Body of pancreas (tissue), 4 donors: ENCODE measurements at regions of chr2 and their contacts with region 1.

Region 1: GRCh38 chr2:217785544-217786045 is 217.2 kb downstream of the TNS1 start:
- DNase-seq: peak; percentile 76 to 87 (median 82)
- ATAC-seq: peak; percentile 78
- H3K4me3 ChIP-seq: no peak overlapping the region
- H3K27ac ChIP-seq: no peak overlapping the region
- H3K4me1 ChIP-seq: peaks cover 6% of the 10 kb centered on the region
- H3K27me3 ChIP-seq: no peaks in the 10 kb centered on the region
- CTCF ChIP-seq: peak; percentile 88 to 98 (median 95)
- POLR2A ChIP-seq: no peak

Region 2: DNA sequence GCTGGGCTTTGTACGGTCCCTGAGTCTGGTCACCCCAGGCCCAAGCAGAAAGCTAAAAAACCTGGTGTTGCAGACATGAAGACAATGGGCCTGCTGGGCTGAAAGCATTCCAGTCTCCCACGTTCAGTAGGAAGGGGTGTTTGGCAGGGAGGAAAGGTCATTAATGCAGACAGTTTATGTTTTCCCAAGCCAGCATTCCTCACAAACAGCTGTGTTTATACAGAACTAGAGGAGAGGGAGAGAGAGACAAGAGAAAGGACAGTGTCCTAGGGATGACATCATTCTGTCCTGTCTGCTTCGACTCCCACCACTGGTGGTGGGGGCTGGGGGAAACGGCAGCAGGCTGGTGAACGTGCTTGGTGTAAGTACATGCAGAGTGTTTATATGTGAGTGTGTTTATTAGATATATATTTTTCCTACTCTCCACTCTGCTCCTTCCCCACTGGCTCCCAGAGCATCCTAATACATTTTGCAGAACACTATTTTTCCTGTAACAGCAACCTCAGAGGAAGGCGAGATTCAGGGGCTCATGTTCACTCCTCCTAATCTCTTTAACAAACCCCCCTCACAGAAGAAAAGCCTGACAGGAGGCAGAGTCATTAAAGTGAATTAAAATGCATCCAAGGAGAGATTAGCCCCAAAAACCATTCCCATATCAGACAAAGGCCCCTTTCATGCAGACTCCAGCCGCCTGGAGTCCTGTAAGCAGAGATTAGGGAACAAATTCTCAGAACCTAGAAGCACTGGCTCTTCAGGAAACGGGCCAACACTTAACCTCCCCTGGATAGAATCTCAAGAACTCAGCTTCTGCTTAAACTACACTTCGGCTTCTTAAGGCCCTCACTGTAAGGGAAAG is 163.2 kb before region 1 on chr2:
- intact Hi-C with region 1: no loop called
- DNase-seq: peak in 1 of 4 donors; percentile 9
- ATAC-seq: no peak
- H3K4me3 ChIP-seq: no peak overlapping the region
- H3K27ac ChIP-seq: no peak overlapping the region
- H3K4me1 ChIP-seq: no peaks in the 10 kb centered on the region
- H3K27me3 ChIP-seq: no peaks in the 10 kb centered on the region
- CTCF ChIP-seq: no peak
- POLR2A ChIP-seq: no peak

Region 3: DNA sequence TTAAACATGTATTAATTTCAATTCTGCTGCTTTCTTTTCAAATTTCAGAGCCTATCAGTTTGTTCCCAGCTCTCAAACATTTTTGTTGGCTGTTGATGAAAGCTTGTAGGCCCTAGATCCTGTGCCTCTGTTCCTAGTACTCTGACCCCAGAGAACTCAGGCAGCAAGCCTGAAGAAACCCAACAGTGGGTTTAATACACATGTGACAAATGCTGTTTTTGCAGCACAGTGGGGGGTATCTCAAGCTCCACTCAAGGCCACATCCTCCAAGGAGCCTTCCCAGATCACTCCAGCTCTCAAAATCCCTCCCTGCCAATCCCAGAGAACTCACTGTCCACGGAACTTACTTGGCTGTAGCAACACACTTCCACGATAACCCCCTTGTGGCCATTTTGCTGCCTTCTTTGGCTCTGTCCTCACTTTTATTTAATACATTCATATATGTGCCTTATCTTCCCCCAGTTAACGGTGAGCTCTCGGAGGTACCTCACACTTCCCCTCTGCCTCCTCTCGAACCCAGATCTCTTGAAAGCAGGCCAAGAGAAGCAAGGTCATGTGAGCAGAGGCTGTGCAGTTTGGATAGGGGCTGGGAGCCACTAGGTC is 94.8 kb after region 1 on chr2:
- intact Hi-C with region 1: no loop called
- DNase-seq: no peak
- ATAC-seq: no peak
- H3K4me3 ChIP-seq: no peak overlapping the region
- H3K27ac ChIP-seq: peak overlapping the region in 1 of 4 donors; percentile 1
- H3K4me1 ChIP-seq: no peaks in the 10 kb centered on the region
- H3K27me3 ChIP-seq: no peaks in the 10 kb centered on the region
- CTCF ChIP-seq: no peak
- POLR2A ChIP-seq: no peak

Region 4: DNA sequence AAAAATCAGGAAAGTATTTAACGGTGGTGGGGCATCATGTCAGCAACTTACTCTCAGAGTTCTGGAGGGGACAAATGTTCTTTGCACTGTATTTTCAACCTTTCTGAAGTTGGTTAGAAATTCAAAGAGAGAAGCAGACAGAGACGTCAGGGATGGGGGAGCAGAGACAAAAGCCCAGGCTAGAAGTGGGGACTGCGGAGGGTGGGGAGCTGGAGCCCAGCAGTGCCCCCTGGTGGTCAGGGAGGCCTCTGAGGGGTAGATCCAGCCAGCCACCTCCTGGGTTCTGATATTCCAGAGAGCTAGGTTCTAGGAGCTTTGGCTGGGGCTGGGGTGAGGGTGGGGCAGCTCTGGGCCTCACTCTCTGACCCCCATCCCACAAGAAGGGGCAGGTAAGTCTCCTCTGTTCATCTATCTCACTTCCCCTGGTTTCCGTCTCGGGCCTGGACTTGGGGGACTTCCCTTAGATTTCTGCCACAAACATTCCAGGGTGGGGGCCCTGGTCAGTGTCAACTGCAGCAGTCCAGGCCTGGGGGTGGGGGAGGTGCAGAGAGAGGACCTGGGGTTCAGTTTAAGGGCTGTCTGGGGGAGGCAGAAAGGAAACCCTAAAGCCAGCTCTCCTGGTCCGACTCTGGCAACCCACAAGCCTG is 208.3 kb after region 1 on chr2:
- intact Hi-C with region 1: loop called (anchors 5 kb)
- DNase-seq: peak; percentile 77 to 85 (median 80)
- ATAC-seq: peak; percentile 57
- H3K4me3 ChIP-seq: no peak overlapping the region
- H3K27ac ChIP-seq: peak overlapping the region; percentile 86 to 97 (median 92)
- H3K4me1 ChIP-seq: peaks cover 94% of the 10 kb centered on the region
- H3K27me3 ChIP-seq: no peaks in the 10 kb centered on the region
- CTCF ChIP-seq: peak; percentile 71 to 86 (median 76)
- POLR2A ChIP-seq: no peak

Region 5: DNA sequence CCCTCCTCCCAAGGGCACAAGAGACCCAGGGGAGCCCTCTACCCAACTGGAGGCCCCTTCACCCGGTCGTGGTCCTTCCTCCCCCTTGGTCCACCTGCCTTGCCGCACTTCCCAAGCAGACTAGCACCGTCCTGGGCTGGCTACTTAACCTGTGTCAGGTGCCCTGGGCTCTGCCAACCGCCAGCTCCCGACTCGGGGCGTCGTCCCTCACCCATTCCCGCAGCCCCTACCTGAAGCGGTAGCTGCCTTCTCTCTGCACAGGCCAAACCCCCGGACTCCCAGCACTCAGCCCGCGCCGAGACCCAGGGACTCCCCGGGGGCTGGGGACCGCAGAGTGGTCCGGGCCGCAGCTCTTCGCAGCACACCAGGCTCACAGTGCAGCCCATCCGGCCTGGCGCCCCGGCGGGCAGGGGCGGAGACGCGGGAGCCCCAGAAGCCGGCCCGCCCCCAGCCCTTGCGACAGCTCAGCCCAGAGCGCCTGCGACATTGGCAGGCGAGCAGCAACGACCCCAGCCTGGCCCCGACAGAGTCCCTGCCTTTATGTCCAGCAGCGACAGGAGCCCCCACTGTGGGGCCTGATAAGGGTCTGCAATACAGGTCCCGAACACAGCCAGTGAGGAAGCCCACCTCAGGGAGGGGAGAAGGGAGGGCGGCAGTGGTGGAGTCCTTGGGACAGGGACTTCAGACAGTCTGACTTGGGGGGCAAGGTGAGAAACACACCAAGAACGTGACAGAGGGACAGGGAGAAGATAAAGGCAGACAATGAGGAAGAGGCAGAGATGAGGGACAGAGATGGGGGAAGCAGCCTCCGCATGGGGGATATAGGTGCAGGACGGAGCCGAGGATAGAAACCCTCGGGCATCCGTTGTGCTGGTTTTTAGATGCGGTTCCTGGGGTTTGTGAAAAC is 248.2 kb after region 1 on chr2:
- intact Hi-C with region 1: loop called (anchors 10 kb)
- DNase-seq: no peak
- ATAC-seq: no peak
- H3K4me3 ChIP-seq: no peak overlapping the region
- H3K27ac ChIP-seq: no peak overlapping the region
- H3K4me1 ChIP-seq: peaks cover 9% of the 10 kb centered on the region
- H3K27me3 ChIP-seq: no peaks in the 10 kb centered on the region
- CTCF ChIP-seq: no peak
- POLR2A ChIP-seq: no peak

Region 6: DNA sequence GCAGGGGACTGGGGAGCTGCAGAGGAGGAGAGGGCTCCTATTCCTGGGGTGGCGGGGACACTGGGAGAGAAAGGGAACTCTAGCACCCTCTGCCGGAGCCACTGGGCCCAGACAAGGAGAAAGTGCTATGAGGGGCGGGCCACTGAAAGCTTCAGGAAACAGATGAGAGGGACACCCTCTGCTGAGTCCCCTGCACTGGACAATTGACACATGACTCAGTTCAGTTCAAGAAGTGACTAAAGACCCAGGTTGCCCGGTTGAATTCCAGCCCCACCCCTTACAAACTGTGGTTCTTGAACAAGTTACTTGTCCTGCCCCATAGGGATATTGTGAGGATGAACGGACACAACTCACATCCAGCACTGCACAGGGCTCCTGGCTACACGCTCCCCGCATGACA is 288.4 kb after region 1 on chr2:
- intact Hi-C with region 1: loop called (anchors 5 kb)
- DNase-seq: peak; percentile 38 to 62 (median 44)
- ATAC-seq: peak; percentile 53
- H3K4me3 ChIP-seq: no peak overlapping the region
- H3K27ac ChIP-seq: no peak overlapping the region
- H3K4me1 ChIP-seq: peaks cover 3% of the 10 kb centered on the region
- H3K27me3 ChIP-seq: no peaks in the 10 kb centered on the region
- CTCF ChIP-seq: peak in 5 of 7 experiments; percentile 35 to 51 (median 43)
- POLR2A ChIP-seq: no peak